ENCODE measurements at regions of chr9 and their contacts with region 1.

Region 1: GRCh38 chr9:36328798-36329411 is 70.7 kb upstream of the GNE start:
- DNase-seq: peak; percentile 75
- H3K27ac ChIP-seq: no peak overlapping the region
- CTCF ChIP-seq: peak; percentile 96

Region 2: GRCh38 chr9:36249189-36249588 is 79.7 kb before region 1 on chr9:
- CTCF ChIA-PET with region 1: interaction called, 11 read pairs
- POLR2A ChIA-PET with region 1: interaction called, 4 read pairs
- DNase-seq: no peak
- H3K27ac ChIP-seq: no peak overlapping the region
- CTCF ChIP-seq: no peak

Region 3: GRCh38 chr9:36258208-36258988 is 70.5 kb before region 1 on chr9 and contains the start of gene GNE:
- CTCF ChIA-PET with region 1: interaction called, 3 read pairs
- POLR2A ChIA-PET with region 1: interaction called, 10 read pairs
- DNase-seq: peak; percentile 95
- H3K27ac ChIP-seq: peak within 1 kb of the TSS; percentile 96
- CTCF ChIP-seq: no peak